ENCODE measurements at regions of chr1 and their contacts with region 1.

Region 1: DNA sequence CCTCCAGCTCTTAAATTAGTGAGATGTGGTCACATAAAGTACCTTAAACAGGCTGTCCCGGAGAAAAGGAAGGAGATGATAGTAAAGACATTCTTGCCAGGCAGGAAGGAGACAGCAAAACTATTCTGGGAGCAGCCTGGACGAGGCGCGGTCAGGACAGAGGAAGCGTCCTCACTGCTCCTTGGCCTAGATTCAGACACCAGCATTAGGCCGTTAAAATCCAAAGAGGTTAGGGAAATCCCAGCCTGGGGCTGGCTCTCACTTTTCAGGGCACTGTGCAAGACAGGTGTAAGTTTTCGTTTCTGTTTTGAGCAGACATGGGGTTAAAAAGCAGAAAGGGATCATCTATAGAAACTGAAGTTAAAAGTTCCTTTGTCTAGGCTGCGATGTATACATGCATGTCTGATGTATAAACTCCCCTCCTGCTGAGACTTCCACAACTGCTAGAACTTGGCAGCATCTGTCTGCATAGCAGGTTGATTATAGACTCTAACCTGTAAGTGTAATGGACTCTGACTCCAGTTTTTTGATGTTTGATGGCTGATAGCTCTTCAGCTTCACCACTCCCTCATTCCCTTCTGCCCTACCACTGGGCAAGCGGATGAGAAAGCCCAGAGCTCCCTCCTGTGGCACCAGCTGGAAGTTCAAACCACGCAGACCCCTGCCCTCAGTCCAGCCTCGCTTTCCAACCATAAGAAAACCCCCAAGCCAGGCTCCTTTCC is 21.5 kb downstream of the STPG1 start:
- DNase-seq: peak; percentile 56 to 82 (median 77)
- ATAC-seq: peak; percentile 80 to 84
- H3K4me3 ChIP-seq: peak overlapping the region; percentile 8
- H3K27ac ChIP-seq: peak overlapping the region; percentile 89
- H3K4me1 ChIP-seq: peaks cover 6% of the 10 kb centered on the region
- H3K27me3 ChIP-seq: no peaks in the 10 kb centered on the region

Region 2: GRCh38 chr1:24036088-24036487 is 356.0 kb before region 1 on chr1:
- intact Hi-C with region 1: no loop called
- DNase-seq: no peak
- ATAC-seq: no peak
- H3K4me3 ChIP-seq: no peak overlapping the region
- H3K27ac ChIP-seq: no peak overlapping the region
- H3K4me1 ChIP-seq: no peaks in the 10 kb centered on the region
- H3K27me3 ChIP-seq: no peaks in the 10 kb centered on the region

Region 3: DNA sequence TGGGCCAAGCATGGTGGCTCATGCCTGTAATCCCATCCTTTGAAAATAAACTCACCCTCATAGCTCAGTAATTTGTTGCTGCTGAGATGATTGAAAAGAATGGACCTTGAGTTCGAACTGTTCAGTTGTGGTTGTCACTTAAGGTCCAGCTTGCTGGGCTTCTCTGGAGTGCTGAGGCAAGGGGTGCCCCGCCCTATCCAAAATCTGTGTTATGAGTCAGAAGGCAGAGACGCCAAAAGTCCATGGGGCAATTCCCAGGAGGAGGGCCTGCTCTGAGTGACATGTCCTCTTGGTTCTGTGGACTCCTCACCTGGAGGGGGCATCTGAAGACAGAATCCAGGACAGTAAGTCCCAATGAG is 345.0 kb before region 1 on chr1:
- intact Hi-C with region 1: no loop called
- DNase-seq: peak in 2 of 3 donors; percentile 64 to 76
- ATAC-seq: peak; percentile 77 to 82
- H3K4me3 ChIP-seq: no peak overlapping the region
- H3K27ac ChIP-seq: no peak overlapping the region
- H3K4me1 ChIP-seq: peaks cover 6% of the 10 kb centered on the region
- H3K27me3 ChIP-seq: no peaks in the 10 kb centered on the region

Region 4: DNA sequence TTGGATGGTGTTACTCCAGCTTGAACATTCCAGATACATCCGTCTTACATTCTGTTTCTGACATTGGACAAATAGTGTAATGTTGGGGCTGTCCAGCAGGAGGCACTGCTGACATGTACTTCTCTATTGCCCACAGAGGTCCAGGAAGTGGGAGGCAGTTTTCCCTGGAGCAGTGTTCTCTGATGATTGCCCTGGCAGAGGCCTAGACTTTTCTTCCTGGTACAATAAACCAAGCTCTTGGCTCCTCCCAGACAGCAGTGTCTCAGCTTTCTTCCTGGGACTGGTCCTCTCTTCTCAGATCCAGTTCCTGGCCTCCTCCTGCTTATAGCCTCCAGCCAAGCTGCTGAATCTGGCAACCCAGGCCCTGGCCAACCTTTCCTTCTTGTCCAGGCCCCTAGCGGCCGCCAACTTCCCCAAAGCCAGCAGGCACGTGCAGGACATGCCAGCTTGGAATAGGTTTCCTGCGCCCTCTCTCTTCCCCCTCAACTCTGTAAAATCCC is 190.1 kb before region 1 on chr1:
- intact Hi-C with region 1: loop called (anchors 2 kb)
- DNase-seq: peak; percentile 76 to 88 (median 76)
- ATAC-seq: peak; percentile 82 to 87
- H3K4me3 ChIP-seq: no peak overlapping the region
- H3K27ac ChIP-seq: no peak overlapping the region
- H3K4me1 ChIP-seq: no peaks in the 10 kb centered on the region
- H3K27me3 ChIP-seq: no peaks in the 10 kb centered on the region

Region 5: GRCh38 chr1:24321697-24322469 is 70.2 kb before region 1 on chr1:
- intact Hi-C with region 1: loop called in 1 of 4 experiments (anchors 5 kb)
- DNase-seq: peak; percentile 58 to 76 (median 75)
- ATAC-seq: peak; percentile 71 to 76
- H3K4me3 ChIP-seq: peak overlapping the region; percentile 47
- H3K27ac ChIP-seq: no peak overlapping the region
- H3K4me1 ChIP-seq: peaks cover 2% of the 10 kb centered on the region
- H3K27me3 ChIP-seq: no peaks in the 10 kb centered on the region

Region 6: GRCh38 chr1:24438423-24438901 is 46.4 kb after region 1 on chr1:
- intact Hi-C with region 1: no loop called
- DNase-seq: peak; percentile 40 to 74 (median 67)
- ATAC-seq: peak; percentile 77 to 80
- H3K4me3 ChIP-seq: no peak overlapping the region
- H3K27ac ChIP-seq: no peak overlapping the region
- H3K4me1 ChIP-seq: peaks cover 4% of the 10 kb centered on the region
- H3K27me3 ChIP-seq: no peaks in the 10 kb centered on the region